Right ventricle myocardium inferior (tissue), 1 donor: ENCODE measurements at regions of chr7 and their contacts with region 1.

Region 1: GRCh38 chr7:80277434-80278427 is 143.1 kb downstream of the GNAI1 start:
- DNase-seq: no peak
- ATAC-seq: no peak

Region 2: DNA sequence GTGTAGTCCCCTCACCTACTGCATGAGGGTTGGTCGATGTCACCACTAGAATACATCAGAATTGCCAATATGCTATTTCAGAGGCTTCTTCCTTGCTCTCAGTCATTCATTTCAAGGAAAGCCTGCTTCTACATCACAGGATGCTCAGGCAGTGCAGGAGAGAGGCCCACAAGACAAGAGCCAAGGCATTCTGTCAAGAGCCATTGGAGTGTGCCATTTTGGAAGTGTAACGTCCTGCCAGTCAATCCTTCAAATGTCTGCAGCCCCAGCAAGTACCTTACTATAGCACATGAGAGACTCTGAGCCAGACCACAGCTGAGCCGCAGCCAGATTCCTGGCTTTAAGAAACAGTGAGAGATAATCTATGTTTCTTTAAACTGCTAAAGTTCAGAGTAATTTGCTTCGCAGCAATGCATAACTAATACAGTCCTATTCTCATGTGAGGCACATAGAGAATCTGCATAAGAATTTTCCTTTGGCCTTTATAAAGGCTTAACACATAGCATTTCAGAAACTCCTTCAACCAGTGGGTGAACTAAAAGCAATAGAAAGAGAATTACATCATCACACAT is 309.6 kb before region 1 on chr7:
- intact Hi-C with region 1: no loop called
- DNase-seq: no peak
- ATAC-seq: no peak

Region 3: GRCh38 chr7:80186721-80187120 is 91.0 kb before region 1 on chr7:
- intact Hi-C with region 1: no loop called
- DNase-seq: no peak
- ATAC-seq: no peak

Region 4: GRCh38 chr7:80197627-80198026 is 80.1 kb before region 1 on chr7:
- intact Hi-C with region 1: loop called (anchors 5 kb)
- DNase-seq: no peak
- ATAC-seq: no peak

Region 5: DNA sequence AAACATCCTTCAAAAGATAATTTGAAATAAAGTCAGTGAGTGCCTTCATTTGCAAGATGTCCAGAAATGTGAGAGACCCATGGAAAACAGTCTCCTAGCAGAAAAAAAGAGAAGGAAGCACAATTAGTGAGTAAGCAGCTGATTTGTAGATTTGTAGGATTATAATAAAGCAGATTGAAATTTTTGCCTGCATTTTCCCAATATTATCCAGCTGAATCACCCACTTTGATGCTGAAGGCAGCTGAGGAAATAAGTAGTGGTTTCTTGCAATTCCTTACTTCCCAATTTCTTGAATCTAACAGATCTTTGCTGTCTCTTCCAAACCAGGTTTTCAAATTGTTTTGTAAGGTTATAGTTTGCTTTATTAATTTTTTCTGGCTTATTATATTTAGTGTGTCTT is 52.7 kb after region 1 on chr7:
- intact Hi-C with region 1: loop called (anchors 5 kb)
- DNase-seq: no peak
- ATAC-seq: no peak